Naive thymus-derived CD4-positive, alpha-beta T cell (primary cell): ENCODE measurements at regions of chr7 and their contacts with region 1.

Region 1: GRCh38 chr7:29921404-29922010 is 68.1 kb downstream of the SCRN1 start:
- DNase-seq: peak in 8 of 9 donors; percentile 11 to 55 (median 38)
- ATAC-seq: peak; percentile 93
- H3K4me3 ChIP-seq: no peak overlapping the region
- H3K4me3 Mint-ChIP-seq: no peak overlapping the region
- H3K27ac ChIP-seq: no peak overlapping the region
- H3K27ac Mint-ChIP-seq: no peak overlapping the region
- H3K4me1 ChIP-seq: no peaks in the 10 kb centered on the region
- H3K4me1 Mint-ChIP-seq: peaks cover 0 to 2% (median 0%) of the 10 kb centered on the region in 7 donors
- H3K27me3 ChIP-seq: no peaks in the 10 kb centered on the region
- H3K27me3 Mint-ChIP-seq: peaks cover 0 to 12% (median under 1%) of the 10 kb centered on the region in 5 donors

Region 2: DNA sequence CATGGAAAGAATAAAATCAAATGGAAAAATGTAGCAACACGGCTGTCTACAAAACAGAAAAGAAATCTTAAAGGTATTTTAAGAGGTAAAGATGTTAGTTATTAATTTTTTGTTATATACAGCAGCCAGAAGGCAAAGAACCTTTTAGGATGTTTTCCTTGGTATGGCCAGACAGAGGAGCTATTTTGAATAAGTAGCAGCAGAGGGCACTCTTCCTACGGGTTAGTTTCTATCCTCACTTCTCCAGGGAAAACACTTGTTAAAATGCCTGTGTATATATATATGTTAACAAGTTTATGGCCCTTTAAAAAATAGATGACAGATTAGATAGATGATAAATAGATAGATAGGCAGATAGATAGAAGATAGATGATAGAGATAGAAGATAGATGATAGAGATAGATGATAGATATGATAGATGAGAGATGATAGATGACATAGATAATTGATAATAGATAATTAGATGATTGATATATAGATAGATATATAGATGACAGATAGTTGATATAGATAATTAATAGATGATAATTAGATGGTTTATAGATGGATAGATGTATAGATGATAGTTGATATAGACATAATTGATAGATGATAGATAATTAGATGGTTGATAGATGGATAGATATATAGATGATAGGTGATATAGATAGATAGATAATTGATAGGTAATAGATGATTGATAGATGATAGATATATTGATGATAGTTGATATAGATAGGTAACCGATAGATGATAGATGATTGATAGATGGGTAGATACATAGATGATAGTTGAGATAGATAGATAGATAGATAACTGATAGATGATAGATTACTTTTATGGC is 173.0 kb before region 1 on chr7:
- CTCF ChIA-PET with region 1: no interaction called
- POLR2A ChIA-PET with region 1: no interaction called
- intact Hi-C with region 1: loop called in 1 of 2 experiments (anchors 1 kb)
- DNase-seq: peak in 1 of 9 donors; percentile 5
- ATAC-seq: no peak
- H3K4me3 ChIP-seq: no peak overlapping the region
- H3K4me3 Mint-ChIP-seq: no peak overlapping the region
- H3K27ac ChIP-seq: no peak overlapping the region
- H3K27ac Mint-ChIP-seq: no peak overlapping the region
- H3K4me1 ChIP-seq: no peaks in the 10 kb centered on the region
- H3K4me1 Mint-ChIP-seq: no peaks in the 10 kb centered on the region
- H3K27me3 ChIP-seq: no peaks in the 10 kb centered on the region
- H3K27me3 Mint-ChIP-seq: peaks cover 0 to 21% (median 5%) of the 10 kb centered on the region in 5 donors

Region 3: DNA sequence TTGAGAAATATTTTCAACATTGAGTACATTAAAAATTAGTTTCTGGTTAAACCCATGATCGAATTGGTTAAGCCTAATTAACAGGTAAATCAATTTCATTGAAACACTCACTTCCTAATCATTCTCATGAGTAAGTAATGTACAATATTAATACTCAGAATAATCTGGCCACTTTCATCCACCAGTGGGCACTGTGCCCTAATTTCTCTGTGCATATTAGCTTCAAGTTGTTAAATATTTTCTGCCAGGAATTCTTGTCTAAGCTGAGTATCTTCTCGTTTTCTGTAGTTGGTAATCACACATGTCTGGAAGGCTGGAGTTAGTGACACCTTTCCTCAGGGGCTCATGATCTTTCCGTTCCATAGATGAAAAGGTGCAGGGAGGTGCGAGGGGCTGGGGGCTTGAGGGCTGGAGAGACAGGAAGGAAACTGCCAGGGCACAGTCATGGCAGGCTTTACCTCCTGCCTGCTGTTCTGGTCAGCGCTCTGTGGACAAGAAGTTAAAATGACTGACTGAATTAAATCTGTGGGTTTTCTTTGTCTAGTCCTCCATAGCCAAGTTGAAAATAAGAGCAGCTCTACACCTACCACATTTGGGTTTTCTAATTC is 43.3 kb before region 1 on chr7:
- CTCF ChIA-PET with region 1: interaction called, 3 read pairs
- POLR2A ChIA-PET with region 1: no interaction called
- intact Hi-C with region 1: loop called in 1 of 2 experiments (anchors 1 kb)
- DNase-seq: peak in 4 of 9 donors; percentile 17 to 22 (median 20)
- ATAC-seq: peak; percentile 51
- H3K4me3 ChIP-seq: no peak overlapping the region
- H3K4me3 Mint-ChIP-seq: peak overlapping the region in 1 of 10 donors; percentile 4
- H3K27ac ChIP-seq: no peak overlapping the region
- H3K27ac Mint-ChIP-seq: no peak overlapping the region
- H3K4me1 ChIP-seq: peaks cover 0 to 2% of the 10 kb centered on the region in 2 donors
- H3K4me1 Mint-ChIP-seq: peaks cover 0 to 15% (median 10%) of the 10 kb centered on the region in 7 donors
- H3K27me3 ChIP-seq: no peaks in the 10 kb centered on the region
- H3K27me3 Mint-ChIP-seq: peaks cover 0 to 29% (median 11%) of the 10 kb centered on the region in 5 donors

Region 4: DNA sequence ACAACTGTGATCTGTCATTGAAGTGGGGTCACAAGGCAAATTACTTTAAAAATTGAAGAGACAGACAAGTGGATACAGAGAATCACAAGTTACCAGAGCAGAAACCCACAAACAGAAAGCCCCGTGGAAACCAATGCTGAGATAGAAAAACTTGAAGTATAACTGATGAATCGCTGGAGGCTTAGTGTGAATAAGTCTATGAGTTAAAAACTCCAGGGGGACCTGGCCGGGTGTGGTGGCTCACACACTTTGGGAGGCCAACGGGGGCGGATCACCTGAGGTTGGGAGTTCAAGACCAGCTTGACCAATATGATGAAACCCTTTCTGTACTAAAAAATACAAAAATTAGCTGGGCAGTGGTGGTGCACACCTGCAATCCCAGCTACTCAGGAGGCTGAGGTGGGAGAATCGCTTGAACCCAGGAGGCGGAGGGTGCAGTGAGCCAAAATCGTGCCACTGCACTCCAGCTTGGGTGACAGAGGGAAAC is 293.2 kb after region 1 on chr7:
- CTCF ChIA-PET with region 1: no interaction called
- POLR2A ChIA-PET with region 1: no interaction called
- intact Hi-C with region 1: no loop called
- DNase-seq: no peak
- ATAC-seq: no peak
- H3K4me3 ChIP-seq: no peak overlapping the region
- H3K4me3 Mint-ChIP-seq: no peak overlapping the region
- H3K27ac ChIP-seq: no peak overlapping the region
- H3K27ac Mint-ChIP-seq: no peak overlapping the region
- H3K4me1 ChIP-seq: no peaks in the 10 kb centered on the region
- H3K4me1 Mint-ChIP-seq: no peaks in the 10 kb centered on the region
- H3K27me3 ChIP-seq: no peaks in the 10 kb centered on the region
- H3K27me3 Mint-ChIP-seq: peaks cover 0 to 33% (median 13%) of the 10 kb centered on the region in 5 donors